Endothelial cell of umbilical vein (primary cell): ENCODE measurements at regions of chr9 and their contacts with region 1.

Region 1: DNA sequence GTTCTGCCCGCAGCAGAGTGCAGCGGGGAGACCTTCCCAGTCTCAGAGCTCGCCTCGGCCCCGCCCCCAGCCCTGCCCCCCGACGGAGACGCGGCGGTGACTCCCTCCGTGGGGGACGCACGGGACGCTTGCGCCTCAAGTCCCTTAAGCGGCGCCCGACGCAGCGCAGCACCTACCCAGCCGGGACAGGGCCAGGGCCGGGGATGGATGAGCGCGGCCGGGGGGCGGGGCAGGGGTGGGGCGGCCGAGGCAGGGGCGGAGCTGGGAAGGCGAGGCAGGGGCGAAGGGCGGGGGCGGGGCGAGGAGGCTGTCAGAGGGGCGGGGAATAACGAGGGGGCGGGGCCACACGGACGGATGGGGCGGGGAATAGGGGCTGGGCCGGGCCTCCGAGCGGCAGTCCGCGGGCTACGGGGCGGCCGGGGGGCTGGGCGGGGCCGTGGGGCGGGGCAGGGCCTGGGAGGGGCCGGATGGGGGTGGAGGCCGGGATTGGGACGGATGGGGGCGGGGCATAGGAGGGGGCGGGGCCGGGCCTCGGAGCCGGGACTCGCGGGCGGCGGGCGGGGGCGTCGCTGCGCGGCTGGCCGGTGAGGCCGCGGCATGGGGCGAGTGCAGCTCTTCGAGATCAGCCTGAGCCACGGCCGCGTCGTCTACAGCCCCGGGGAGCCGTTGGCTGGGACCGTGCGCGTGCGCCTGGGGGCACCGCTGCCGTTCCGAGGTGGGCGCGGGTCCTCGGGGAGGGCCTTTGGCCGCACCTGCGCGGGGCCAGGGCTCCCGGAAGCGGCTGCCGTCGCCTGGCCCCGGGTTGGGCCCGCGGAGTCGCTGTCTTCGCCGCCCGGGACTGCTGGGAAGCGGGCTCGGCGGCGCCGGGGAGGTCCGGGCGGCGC is at the start of gene ARRDC1:
- DNase-seq: peak; percentile 84
- H3K4me3 ChIP-seq: peak within 1 kb of the TSS; percentile 34 to 89 (median 62)
- H3K27ac ChIP-seq: peak within 1 kb of the TSS; percentile 48
- H3K4me1 ChIP-seq: peaks cover 5% of the 10 kb centered on the region
- H3K27me3 ChIP-seq: no peaks in the 10 kb centered on the region
- CTCF ChIP-seq: no peak
- POLR2A ChIP-seq: no peak
- total RNA-seq, gene ARRDC1: 21.5 and 22.5 TPM in 2 replicates

Region 2: GRCh38 chr9:137339045-137339907 is 266.1 kb before region 1 on chr9:
- CTCF ChIA-PET with region 1: no interaction called
- POLR2A ChIA-PET with region 1: no interaction called
- dilution Hi-C with region 1: no loop called
- intact Hi-C with region 1: no loop called
- DNase-seq: peak; percentile 81
- H3K4me3 ChIP-seq: peak overlapping the region in 1 of 3 experiments; percentile 56
- H3K27ac ChIP-seq: peak overlapping the region; percentile 94
- H3K4me1 ChIP-seq: peaks cover 26% of the 10 kb centered on the region
- H3K27me3 ChIP-seq: no peaks in the 10 kb centered on the region
- CTCF ChIP-seq: no peak
- POLR2A ChIP-seq: no peak

Region 3: GRCh38 chr9:137578518-137579258 is 26.7 kb before region 1 on chr9 and contains the start of gene DPH7:
- CTCF ChIA-PET with region 1: interaction called, 5 read pairs
- POLR2A ChIA-PET with region 1: interaction called, 3 read pairs
- dilution Hi-C with region 1: no loop called
- intact Hi-C with region 1: loop called (anchors 1 kb)
- DNase-seq: peak; percentile 91
- H3K4me3 ChIP-seq: peak within 1 kb of the TSS; percentile 77 to 94 (median 83)
- H3K27ac ChIP-seq: peak within 1 kb of the TSS; percentile 22
- H3K4me1 ChIP-seq: peaks cover 14% of the 10 kb centered on the region
- H3K27me3 ChIP-seq: no peaks in the 10 kb centered on the region
- CTCF ChIP-seq: peak; percentile 97 to 98
- POLR2A ChIP-seq: peak; percentile 62
- total RNA-seq, gene DPH7: 43.2 TPM in 2 replicates

Region 4: GRCh38 chr9:137618105-137619067 is 13.0 kb after region 1 on chr9 and contains the start of gene EHMT1:
- CTCF ChIA-PET with region 1: interaction called, 4 read pairs
- POLR2A ChIA-PET with region 1: no interaction called
- dilution Hi-C with region 1: no loop called
- intact Hi-C with region 1: loop called (anchors 1 kb)
- DNase-seq: peak; percentile 83
- H3K4me3 ChIP-seq: peak within 1 kb of the TSS; percentile 72 to 82 (median 73)
- H3K27ac ChIP-seq: peak within 1 kb of the TSS; percentile 58
- H3K4me1 ChIP-seq: peaks cover 22% of the 10 kb centered on the region
- H3K27me3 ChIP-seq: no peaks in the 10 kb centered on the region
- CTCF ChIP-seq: no peak
- POLR2A ChIP-seq: peak; percentile 88
- total RNA-seq, gene EHMT1: 103 and 104 TPM in 2 replicates